ENCODE measurements at regions of chr20 and their contacts with region 1.

Region 1: GRCh38 chr20:47886460-47887041 is 101.3 kb upstream of the SULF2 start:
- DNase-seq: no peak
- H3K4me3 ChIP-seq: no peak overlapping the region
- H3K27ac ChIP-seq: no peak overlapping the region
- H3K4me1 ChIP-seq: no peaks in the 10 kb centered on the region
- H3K27me3 ChIP-seq: peaks cover 0 to 11% (median 0%) of the 10 kb centered on the region in 3 donors
- CTCF ChIP-seq: no peak
- EP300 ChIP-seq: no peak
- POLR2A ChIP-seq: no peak

Region 2: GRCh38 chr20:47656318-47656717 is 230.2 kb before region 1 on chr20:
- intact Hi-C with region 1: no loop called
- DNase-seq: no peak
- H3K4me3 ChIP-seq: no peak overlapping the region
- H3K27ac ChIP-seq: no peak overlapping the region
- H3K4me1 ChIP-seq: peaks cover 0 to 8% (median 3%) of the 10 kb centered on the region in 4 donors
- H3K27me3 ChIP-seq: no peaks in the 10 kb centered on the region
- CTCF ChIP-seq: no peak
- EP300 ChIP-seq: no peak
- POLR2A ChIP-seq: no peak

Region 3: GRCh38 chr20:47809913-47810622 is 76.5 kb before region 1 on chr20:
- intact Hi-C with region 1: loop called (anchors 10 kb)
- DNase-seq: peak in 1 of 2 donors; percentile 48
- H3K4me3 ChIP-seq: no peak overlapping the region
- H3K27ac ChIP-seq: no peak overlapping the region
- H3K4me1 ChIP-seq: no peaks in the 10 kb centered on the region
- H3K27me3 ChIP-seq: peaks cover 0 to 77% (median 20%) of the 10 kb centered on the region in 3 donors
- CTCF ChIP-seq: no peak
- EP300 ChIP-seq: no peak
- POLR2A ChIP-seq: no peak

Region 4: DNA sequence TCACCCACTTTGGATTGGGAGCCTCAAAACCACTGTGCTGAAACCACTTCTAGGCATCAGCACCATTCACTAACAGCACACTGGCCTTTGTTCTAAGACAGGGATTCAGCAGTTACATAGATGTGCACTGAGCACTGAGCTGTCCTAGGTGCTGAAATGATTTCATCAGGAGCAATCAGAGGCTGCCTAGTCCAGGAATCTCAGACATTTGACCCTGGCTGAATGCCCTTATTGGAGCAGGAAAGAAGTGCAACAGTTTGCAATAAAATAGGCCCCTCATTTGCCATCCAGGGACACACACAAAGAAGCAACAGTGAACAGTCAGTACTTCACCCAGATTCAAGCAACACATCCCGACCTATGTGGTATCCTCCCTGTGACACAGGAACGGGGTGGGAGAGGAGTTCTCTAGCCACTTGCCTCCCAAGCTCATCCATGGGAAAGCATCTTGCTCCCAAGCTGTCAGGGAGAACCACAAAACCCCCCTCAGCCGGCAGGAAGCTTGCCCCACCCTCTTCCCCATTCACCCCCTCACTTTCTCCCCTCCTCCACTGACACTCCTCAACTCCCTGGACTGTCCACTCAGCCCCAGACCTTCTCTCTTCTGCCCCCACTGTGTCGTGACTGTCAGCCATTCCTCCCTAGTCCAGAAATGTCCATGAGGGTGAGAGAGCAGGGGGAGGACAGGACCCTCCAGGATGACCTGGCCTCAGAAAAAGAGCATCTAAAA is 636.8 kb after region 1 on chr20:
- intact Hi-C with region 1: loop called (anchors 5 kb)
- DNase-seq: peak in 1 of 2 donors; percentile 91
- H3K4me3 ChIP-seq: no peak overlapping the region
- H3K27ac ChIP-seq: no peak overlapping the region
- H3K4me1 ChIP-seq: no peaks in the 10 kb centered on the region
- H3K27me3 ChIP-seq: peaks cover 0 to 24% (median 0%) of the 10 kb centered on the region in 3 donors
- CTCF ChIP-seq: no peak
- EP300 ChIP-seq: no peak
- POLR2A ChIP-seq: no peak

Measured in stomach (tissue), 19 donors.